Activated naive CD4-positive, alpha-beta T cell treated with anti-CD3 and anti-CD28 coated beads for 36 hours (primary cell): ENCODE measurements at regions of chr5 and their contacts with region 1.

Region 1: DNA sequence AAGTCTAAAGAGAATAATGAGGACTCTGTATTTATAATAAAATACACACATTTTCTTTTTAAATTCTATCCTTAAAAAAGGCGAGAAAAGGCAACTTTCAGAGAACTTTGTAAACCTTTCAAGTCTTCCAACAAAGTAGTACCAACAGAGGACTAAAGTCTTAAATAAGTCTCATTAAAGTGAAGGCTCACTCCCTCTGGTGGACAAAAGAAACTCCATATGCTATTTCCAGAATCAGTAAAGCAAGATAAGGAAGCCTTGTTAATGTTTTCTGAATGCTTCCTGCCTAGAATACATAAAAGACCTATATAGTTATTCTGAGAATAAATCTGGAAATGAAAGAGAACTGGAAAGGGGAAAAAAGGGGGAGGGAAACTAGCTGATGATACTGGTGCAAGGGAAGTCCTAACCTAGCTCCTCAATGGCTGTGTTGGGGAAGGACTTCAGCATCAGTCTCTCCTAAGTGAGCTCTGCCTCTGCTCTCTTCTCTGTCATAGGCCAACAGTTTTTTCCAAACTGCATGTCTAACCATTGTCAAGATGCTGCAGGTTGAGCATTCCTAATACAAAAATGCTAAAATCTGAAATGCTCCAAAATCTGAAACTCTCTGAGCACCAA is 7.2 kb downstream of the HMGCS1 start:
- DNase-seq: no peak
- H3K4me3 Mint-ChIP-seq: no peak overlapping the region
- H3K27ac Mint-ChIP-seq: peak overlapping the region; percentile 75
- H3K4me1 Mint-ChIP-seq: peaks cover 80% of the 10 kb centered on the region
- H3K27me3 Mint-ChIP-seq: no peaks in the 10 kb centered on the region

Region 2: DNA sequence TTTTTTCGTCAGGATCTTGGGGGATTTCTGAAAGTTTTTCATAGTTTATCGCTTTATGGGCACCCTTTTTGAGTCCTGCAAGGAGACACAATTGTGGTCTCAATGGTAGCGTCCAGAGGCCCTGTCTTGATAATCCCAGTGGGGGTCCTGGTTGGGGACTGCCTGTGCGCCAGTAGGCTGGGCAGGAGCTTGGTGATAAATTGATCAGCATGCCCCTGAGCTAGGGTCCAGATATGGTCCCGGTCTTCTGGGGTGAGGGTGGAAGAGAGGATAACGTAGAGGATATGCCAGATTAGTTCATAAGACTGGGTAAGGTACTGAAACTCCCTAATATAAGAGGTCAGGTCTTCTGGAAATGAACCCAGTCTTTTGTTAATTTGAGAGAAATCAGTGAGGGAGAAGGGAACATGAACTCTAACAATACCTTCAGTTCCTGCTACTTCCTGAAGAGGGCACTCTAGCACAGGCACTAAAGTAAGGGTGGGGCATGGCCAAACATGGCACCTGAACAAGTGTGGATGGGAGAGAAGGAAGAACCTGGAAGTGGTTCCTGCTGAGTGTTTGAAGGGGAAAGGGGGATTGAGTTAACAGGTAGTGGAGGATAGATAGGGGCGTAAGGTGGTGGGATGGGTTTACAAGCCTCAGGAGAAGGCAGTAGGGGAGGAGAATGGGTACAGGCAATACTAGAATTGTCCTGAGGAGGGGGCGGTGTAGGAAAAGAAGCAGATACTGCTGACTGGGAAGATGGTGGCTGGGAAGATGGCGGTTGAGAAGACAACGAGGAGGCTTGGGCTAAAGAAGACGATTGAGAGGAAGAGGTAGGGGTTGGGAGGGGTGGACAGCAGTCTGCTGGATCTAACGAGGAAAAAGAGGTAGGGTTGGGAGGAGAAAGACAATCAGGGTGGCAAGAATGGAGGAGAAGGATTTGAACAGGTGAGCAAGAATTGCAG is 232.2 kb before region 1 on chr5:
- CTCF ChIA-PET with region 1: no interaction called
- intact Hi-C with region 1: loop called (anchors 1 kb)
- DNase-seq: peak; percentile 70
- H3K4me3 Mint-ChIP-seq: no peak overlapping the region
- H3K27ac Mint-ChIP-seq: peak overlapping the region; percentile 43
- H3K4me1 Mint-ChIP-seq: peaks cover 39% of the 10 kb centered on the region
- H3K27me3 Mint-ChIP-seq: no peaks in the 10 kb centered on the region

Region 3: GRCh38 chr5:43105369-43106289 is 200.4 kb before region 1 on chr5:
- CTCF ChIA-PET with region 1: interaction called, 5 read pairs
- intact Hi-C with region 1: loop called (anchors 1 kb)
- DNase-seq: peak; percentile 92
- H3K4me3 Mint-ChIP-seq: peak overlapping the region; percentile 81
- H3K27ac Mint-ChIP-seq: peak overlapping the region; percentile 87
- H3K4me1 Mint-ChIP-seq: peaks cover 42% of the 10 kb centered on the region
- H3K27me3 Mint-ChIP-seq: no peaks in the 10 kb centered on the region

Region 4: GRCh38 chr5:43110606-43111442 is 195.2 kb before region 1 on chr5:
- CTCF ChIA-PET with region 1: interaction called, 5 read pairs
- intact Hi-C with region 1: loop called (anchors 1 kb)
- DNase-seq: peak; percentile 81
- H3K4me3 Mint-ChIP-seq: no peak overlapping the region
- H3K27ac Mint-ChIP-seq: peak overlapping the region; percentile 71
- H3K4me1 Mint-ChIP-seq: peaks cover 43% of the 10 kb centered on the region
- H3K27me3 Mint-ChIP-seq: no peaks in the 10 kb centered on the region

Region 5: GRCh38 chr5:43233946-43234345 is 72.1 kb before region 1 on chr5:
- CTCF ChIA-PET with region 1: interaction called, 3 read pairs
- intact Hi-C with region 1: loop called (anchors 2 kb)
- DNase-seq: no peak
- H3K4me3 Mint-ChIP-seq: no peak overlapping the region
- H3K27ac Mint-ChIP-seq: no peak overlapping the region
- H3K4me1 Mint-ChIP-seq: peaks cover 5% of the 10 kb centered on the region
- H3K27me3 Mint-ChIP-seq: no peaks in the 10 kb centered on the region

Region 6: GRCh38 chr5:43336159-43336558 is 30.1 kb after region 1 on chr5:
- CTCF ChIA-PET with region 1: no interaction called
- intact Hi-C with region 1: loop called (anchors 1 kb)
- DNase-seq: peak; percentile 40
- H3K4me3 Mint-ChIP-seq: no peak overlapping the region
- H3K27ac Mint-ChIP-seq: peak overlapping the region; percentile 84
- H3K4me1 Mint-ChIP-seq: peaks cover 12% of the 10 kb centered on the region
- H3K27me3 Mint-ChIP-seq: peaks cover 16% of the 10 kb centered on the region

Region 7: GRCh38 chr5:43376496-43377140 is 70.6 kb after region 1 on chr5:
- CTCF ChIA-PET with region 1: no interaction called
- intact Hi-C with region 1: no loop called
- DNase-seq: no peak
- H3K4me3 Mint-ChIP-seq: no peak overlapping the region
- H3K27ac Mint-ChIP-seq: no peak overlapping the region
- H3K4me1 Mint-ChIP-seq: no peaks in the 10 kb centered on the region
- H3K27me3 Mint-ChIP-seq: no peaks in the 10 kb centered on the region

Region 8: GRCh38 chr5:43415946-43416802 is 110.1 kb after region 1 on chr5:
- CTCF ChIA-PET with region 1: no interaction called
- intact Hi-C with region 1: no loop called
- DNase-seq: no peak
- H3K4me3 Mint-ChIP-seq: no peak overlapping the region
- H3K27ac Mint-ChIP-seq: no peak overlapping the region
- H3K4me1 Mint-ChIP-seq: no peaks in the 10 kb centered on the region
- H3K27me3 Mint-ChIP-seq: no peaks in the 10 kb centered on the region

Region 9: DNA sequence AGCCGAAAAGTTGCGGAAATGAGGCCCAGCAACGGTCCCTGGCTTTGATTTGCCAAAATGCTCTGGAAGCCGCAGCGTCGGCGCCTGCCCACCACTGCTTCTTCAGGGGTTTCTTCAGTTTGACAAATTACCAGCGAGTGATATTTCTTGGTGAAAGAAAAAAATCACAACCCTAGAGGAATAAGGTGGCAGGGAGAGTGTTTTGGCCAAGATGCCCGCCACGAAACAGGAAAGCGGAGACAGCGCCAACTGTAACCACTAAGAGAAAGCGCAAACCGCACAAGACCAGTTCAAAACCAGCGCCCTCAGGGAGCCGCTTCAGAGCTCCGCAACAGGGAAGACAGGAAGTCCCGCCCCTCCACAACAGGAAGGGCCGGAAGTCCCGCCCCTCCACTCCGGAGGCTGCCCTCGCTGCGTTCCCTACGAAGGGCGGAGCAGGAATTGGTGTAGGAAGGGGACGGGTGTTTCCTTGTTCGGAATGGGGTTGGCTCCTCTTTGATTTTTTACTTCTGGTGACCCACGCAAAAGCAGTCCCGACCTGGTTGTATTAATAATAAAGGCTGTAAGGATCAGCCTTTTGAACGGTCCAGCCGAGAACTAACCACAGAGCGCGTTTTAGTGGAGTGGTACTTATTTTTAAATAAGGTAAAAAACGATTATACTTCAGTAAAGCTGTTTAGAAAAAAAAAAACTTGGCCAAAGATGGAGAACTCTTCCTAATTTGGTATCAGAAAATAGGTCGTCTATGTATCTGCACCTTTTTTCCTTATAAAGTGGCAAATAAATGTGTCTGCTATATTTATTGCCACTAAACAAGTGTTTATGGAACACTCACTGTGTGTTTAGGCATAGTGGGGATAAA is 209.0 kb after region 1 on chr5 and contains the start of gene C5orf34:
- CTCF ChIA-PET with region 1: no interaction called
- intact Hi-C with region 1: loop called (anchors 2 kb)
- DNase-seq: peak; percentile 98
- H3K4me3 Mint-ChIP-seq: peak within 1 kb of the TSS; percentile 94
- H3K27ac Mint-ChIP-seq: peak within 1 kb of the TSS; percentile 99
- H3K4me1 Mint-ChIP-seq: peaks cover 25% of the 10 kb centered on the region
- H3K27me3 Mint-ChIP-seq: no peaks in the 10 kb centered on the region
- total RNA-seq, gene C5orf34: 14.7 to 16.3 TPM